MCF 10A (cell line): ENCODE measurements at regions of chr5 and their contacts with region 1.

Region 1: GRCh38 chr5:52989781-52990527 is 802 bp downstream of the ITGA2 start:
- DNase-seq: peak; percentile 56
- H3K4me3 Mint-ChIP-seq: peak overlapping the region; percentile 77
- H3K27ac Mint-ChIP-seq: peak overlapping the region; percentile 25
- H3K4me1 Mint-ChIP-seq: peaks cover 48% of the 10 kb centered on the region
- H3K27me3 Mint-ChIP-seq: no peaks in the 10 kb centered on the region
- CTCF ChIP-seq: peak; percentile 42

Region 2: DNA sequence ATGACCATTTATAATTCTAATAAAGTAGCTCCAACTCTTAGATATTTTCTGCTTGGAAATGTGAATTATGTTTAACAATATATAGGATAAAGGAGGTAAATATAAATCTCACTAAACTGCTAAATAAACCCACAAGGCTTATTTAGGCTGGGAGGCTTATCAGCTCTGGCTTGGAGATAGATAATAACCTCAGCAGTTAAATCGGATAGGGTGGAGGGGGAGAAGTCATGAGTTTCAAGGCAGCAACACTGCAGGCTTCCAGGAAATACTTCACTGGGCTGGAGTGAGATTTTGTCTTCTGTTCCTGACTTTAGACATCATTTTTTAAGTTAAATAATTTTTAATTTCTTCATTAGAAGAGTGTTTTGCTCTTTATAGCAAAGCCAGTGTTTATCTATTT is 80.8 kb before region 1 on chr5:
- CTCF ChIA-PET with region 1: no interaction called
- POLR2A ChIA-PET with region 1: no interaction called
- intact Hi-C with region 1: no loop called
- DNase-seq: no peak
- H3K4me3 Mint-ChIP-seq: no peak overlapping the region
- H3K27ac Mint-ChIP-seq: no peak overlapping the region
- H3K4me1 Mint-ChIP-seq: no peaks in the 10 kb centered on the region
- H3K27me3 Mint-ChIP-seq: no peaks in the 10 kb centered on the region
- CTCF ChIP-seq: no peak

Region 3: GRCh38 chr5:52922386-52922785 is 67.6 kb before region 1 on chr5:
- CTCF ChIA-PET with region 1: no interaction called
- POLR2A ChIA-PET with region 1: interaction called, 5 read pairs
- intact Hi-C with region 1: loop called (anchors 1 kb)
- DNase-seq: peak; percentile 100
- H3K4me3 Mint-ChIP-seq: no peak overlapping the region
- H3K27ac Mint-ChIP-seq: peak overlapping the region; percentile 25
- H3K4me1 Mint-ChIP-seq: peaks cover 10% of the 10 kb centered on the region
- H3K27me3 Mint-ChIP-seq: no peaks in the 10 kb centered on the region
- CTCF ChIP-seq: no peak

Region 4: GRCh38 chr5:53008751-53009150 is 18.8 kb after region 1 on chr5:
- CTCF ChIA-PET with region 1: interaction called, 13 read pairs
- POLR2A ChIA-PET with region 1: interaction called, 40 read pairs
- intact Hi-C with region 1: no loop called
- DNase-seq: peak; percentile 76
- H3K4me3 Mint-ChIP-seq: no peak overlapping the region
- H3K27ac Mint-ChIP-seq: no peak overlapping the region
- H3K4me1 Mint-ChIP-seq: peaks cover 22% of the 10 kb centered on the region
- H3K27me3 Mint-ChIP-seq: no peaks in the 10 kb centered on the region
- CTCF ChIP-seq: no peak

Region 5: GRCh38 chr5:53035868-53036381 is 46.0 kb after region 1 on chr5:
- CTCF ChIA-PET with region 1: interaction called, 11 read pairs
- POLR2A ChIA-PET with region 1: interaction called, 70 read pairs
- intact Hi-C with region 1: no loop called
- DNase-seq: peak; percentile 64
- H3K4me3 Mint-ChIP-seq: no peak overlapping the region
- H3K27ac Mint-ChIP-seq: peak overlapping the region; percentile 76
- H3K4me1 Mint-ChIP-seq: peaks cover 43% of the 10 kb centered on the region
- H3K27me3 Mint-ChIP-seq: no peaks in the 10 kb centered on the region
- CTCF ChIP-seq: peak; percentile 23

Region 6: GRCh38 chr5:53069626-53070025 is 79.7 kb after region 1 on chr5:
- CTCF ChIA-PET with region 1: no interaction called
- POLR2A ChIA-PET with region 1: interaction called, 11 read pairs
- intact Hi-C with region 1: loop called (anchors 5 kb)
- DNase-seq: peak; percentile 71
- H3K4me3 Mint-ChIP-seq: no peak overlapping the region
- H3K27ac Mint-ChIP-seq: no peak overlapping the region
- H3K4me1 Mint-ChIP-seq: peaks cover 7% of the 10 kb centered on the region
- H3K27me3 Mint-ChIP-seq: no peaks in the 10 kb centered on the region
- CTCF ChIP-seq: no peak

Region 7: DNA sequence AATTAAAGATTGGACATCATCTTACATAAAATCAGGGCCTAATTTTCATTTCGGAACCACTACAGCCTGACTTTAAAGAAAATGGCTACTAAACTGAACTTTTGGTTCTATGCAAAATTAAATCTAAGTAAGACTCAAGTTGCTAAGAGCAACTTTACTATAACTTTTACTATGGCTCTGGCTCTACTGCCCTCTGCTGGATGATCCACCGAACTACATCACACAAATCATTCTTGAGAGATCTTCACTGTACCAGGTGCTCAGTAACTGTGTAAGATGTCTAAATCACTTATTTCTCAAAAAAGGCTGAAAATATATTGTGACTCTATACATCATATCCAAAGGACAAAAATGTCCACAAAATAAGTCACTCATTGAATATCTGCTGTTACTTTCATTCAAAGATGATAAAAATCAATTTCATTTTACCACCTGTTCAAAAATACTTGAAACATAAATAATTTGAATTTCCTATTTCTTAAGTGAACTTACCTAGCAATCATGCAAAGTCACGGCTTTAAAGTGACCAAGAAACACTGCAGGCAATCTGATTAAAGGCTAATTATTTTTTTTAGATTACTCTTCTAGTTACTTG is 106.1 kb after region 1 on chr5:
- CTCF ChIA-PET with region 1: interaction called, 18 read pairs
- POLR2A ChIA-PET with region 1: interaction called, 4 read pairs
- intact Hi-C with region 1: loop called (anchors 1 kb)
- DNase-seq: peak; percentile 70
- H3K4me3 Mint-ChIP-seq: no peak overlapping the region
- H3K27ac Mint-ChIP-seq: no peak overlapping the region
- H3K4me1 Mint-ChIP-seq: peaks cover 7% of the 10 kb centered on the region
- H3K27me3 Mint-ChIP-seq: no peaks in the 10 kb centered on the region
- CTCF ChIP-seq: peak; percentile 69